Heart left ventricle (tissue), 16 donors: ENCODE measurements at regions of chr14 and their contacts with region 1.

Region 1: DNA sequence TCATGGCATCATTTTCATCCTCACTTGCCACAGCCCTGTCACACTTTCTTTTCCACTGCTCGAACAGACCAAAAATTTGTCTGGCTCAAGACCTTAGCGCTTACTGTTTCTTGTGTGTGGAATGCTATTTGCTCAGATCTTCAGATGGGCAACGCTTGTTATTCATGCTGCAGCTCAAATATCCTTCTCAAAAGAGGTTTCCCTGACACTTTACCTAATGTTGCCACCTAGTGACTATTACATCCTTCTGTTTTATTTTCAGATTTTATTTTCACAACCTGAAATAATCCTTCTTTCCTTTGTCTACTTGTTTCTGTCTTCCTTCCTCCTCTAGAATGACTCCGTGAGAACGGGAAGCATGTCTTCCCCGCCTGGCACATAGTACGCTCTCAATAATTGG is 5.6 kb downstream of the FBXO33 start:
- DNase-seq: no peak
- ATAC-seq: no peak
- H3K4me3 ChIP-seq: no peak overlapping the region
- H3K27ac ChIP-seq: no peak overlapping the region
- H3K4me1 ChIP-seq: peaks cover 3 to 78% (median 56%) of the 10 kb centered on the region in 12 donors
- H3K27me3 ChIP-seq: no peaks in the 10 kb centered on the region
- CTCF ChIP-seq: peak in 7 of 12 donors; percentile 4 to 37 (median 23)
- POLR2A ChIP-seq: no peak

Region 2: GRCh38 chr14:39169541-39169900 is 257.1 kb before region 1 on chr14:
- intact Hi-C with region 1: loop called in 5 of 10 experiments (anchors 5 to 10 kb)
- DNase-seq: no peak
- ATAC-seq: peak in 3 of 4 donors; percentile 23 to 60 (median 35)
- H3K4me3 ChIP-seq: peak overlapping the region; percentile 69 to 88 (median 82)
- H3K27ac ChIP-seq: peak overlapping the region; percentile 89 to 99 (median 98)
- H3K4me1 ChIP-seq: peaks cover 0 to 45% (median 27%) of the 10 kb centered on the region in 12 donors
- H3K27me3 ChIP-seq: no peaks in the 10 kb centered on the region
- CTCF ChIP-seq: no peak
- POLR2A ChIP-seq: no peak

Region 3: GRCh38 chr14:39203659-39204606 is 222.7 kb before region 1 on chr14:
- intact Hi-C with region 1: no loop called
- DNase-seq: no peak
- ATAC-seq: no peak
- H3K4me3 ChIP-seq: no peak overlapping the region
- H3K27ac ChIP-seq: no peak overlapping the region
- H3K4me1 ChIP-seq: no peaks in the 10 kb centered on the region
- H3K27me3 ChIP-seq: no peaks in the 10 kb centered on the region
- CTCF ChIP-seq: no peak
- POLR2A ChIP-seq: no peak

Region 4: GRCh38 chr14:39360316-39360715 is 66.3 kb before region 1 on chr14:
- intact Hi-C with region 1: no loop called
- DNase-seq: no peak
- ATAC-seq: no peak
- H3K4me3 ChIP-seq: no peak overlapping the region
- H3K27ac ChIP-seq: no peak overlapping the region
- H3K4me1 ChIP-seq: peaks cover 0 to 3% (median 0%) of the 10 kb centered on the region in 12 donors
- H3K27me3 ChIP-seq: no peaks in the 10 kb centered on the region
- CTCF ChIP-seq: no peak
- POLR2A ChIP-seq: no peak